Prostate gland (tissue), 2 donors: ENCODE measurements at regions of chr14 and their contacts with region 1.

Region 1: GRCh38 chr14:105944632-105945610 is 418.5 kb downstream of the TMEM121 start:
- DNase-seq: peak; percentile 50
- H3K4me3 ChIP-seq: no peak overlapping the region
- H3K27ac ChIP-seq: no peak overlapping the region
- H3K4me1 ChIP-seq: no peaks in the 10 kb centered on the region
- H3K27me3 ChIP-seq: no peaks in the 10 kb centered on the region
- CTCF ChIP-seq: peak; percentile 21 to 89 (median 82)
- POLR2A ChIP-seq: no peak

Region 2: GRCh38 chr14:105682940-105683570 is 261.9 kb before region 1 on chr14:
- intact Hi-C with region 1: loop called (anchors 5 kb)
- DNase-seq: no peak
- H3K4me3 ChIP-seq: no peak overlapping the region
- H3K27ac ChIP-seq: no peak overlapping the region
- H3K4me1 ChIP-seq: no peaks in the 10 kb centered on the region
- H3K27me3 ChIP-seq: no peaks in the 10 kb centered on the region
- CTCF ChIP-seq: no peak
- POLR2A ChIP-seq: no peak

Region 3: GRCh38 chr14:105830171-105830570 is 114.8 kb before region 1 on chr14:
- intact Hi-C with region 1: no loop called
- DNase-seq: no peak
- H3K4me3 ChIP-seq: no peak overlapping the region
- H3K27ac ChIP-seq: no peak overlapping the region
- H3K4me1 ChIP-seq: no peaks in the 10 kb centered on the region
- H3K27me3 ChIP-seq: no peaks in the 10 kb centered on the region
- CTCF ChIP-seq: no peak
- POLR2A ChIP-seq: no peak